Mammary epithelial cell (primary cell): ENCODE measurements at regions of chr15 and their contacts with region 1.

Region 1: GRCh38 chr15:23039151-23039916 is at the start of gene TUBGCP5:
- DNase-seq: peak; percentile 96
- H3K4me3 ChIP-seq: peak within 1 kb of the TSS; percentile 79 to 94 (median 88)
- H3K27ac ChIP-seq: peak within 1 kb of the TSS; percentile 81
- H3K4me1 ChIP-seq: no peaks in the 10 kb centered on the region
- H3K27me3 ChIP-seq: no peaks in the 10 kb centered on the region
- CTCF ChIP-seq: peak; percentile 4 to 49
- total RNA-seq, gene TUBGCP5: 17.0 to 21.5 TPM

Region 2: DNA sequence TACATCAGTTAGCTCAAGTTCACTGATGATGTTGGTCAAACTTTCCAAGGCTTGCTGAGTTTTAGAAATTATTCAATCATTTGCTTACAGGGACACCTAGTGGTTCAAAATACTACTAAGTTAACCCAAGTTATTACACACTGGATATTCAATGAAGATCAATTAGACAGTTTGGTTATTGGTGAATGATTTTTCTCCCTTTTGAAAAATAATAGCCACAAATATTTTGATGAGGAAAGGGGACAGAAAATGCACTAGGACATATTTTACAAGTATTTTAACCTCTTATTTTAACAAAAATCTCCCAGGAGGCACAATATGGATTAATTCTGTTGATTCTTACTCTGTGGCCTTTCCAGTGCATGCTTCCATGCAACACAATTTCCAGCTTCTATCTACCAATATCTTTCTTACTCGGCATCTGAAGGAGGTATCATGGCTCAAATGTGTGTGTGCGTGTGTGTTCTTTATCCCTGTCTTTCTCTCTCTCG is 427.8 kb after region 1 on chr15:
- CTCF ChIA-PET with region 1: interaction called, 5 read pairs
- dilution Hi-C with region 1: no loop called
- in situ Hi-C with region 1: no loop called
- intact Hi-C with region 1: loop called (anchors 1 kb)
- DNase-seq: peak; percentile 1
- H3K4me3 ChIP-seq: no peak overlapping the region
- H3K27ac ChIP-seq: no peak overlapping the region
- H3K4me1 ChIP-seq: no peaks in the 10 kb centered on the region
- H3K27me3 ChIP-seq: no peaks in the 10 kb centered on the region
- CTCF ChIP-seq: peak in 1 of 2 donors; percentile 32